Activated naive CD4-positive, alpha-beta T cell treated with anti-CD3 and anti-CD28 coated beads for 36 hours (primary cell): ENCODE measurements at regions of chr5 and their contacts with region 1.

Region 1: GRCh38 chr5:97162045-97162444 is 19.6 kb upstream of the LIX1 start:
- DNase-seq: peak; percentile 76
- H3K4me3 Mint-ChIP-seq: no peak overlapping the region
- H3K27ac Mint-ChIP-seq: no peak overlapping the region
- H3K4me1 Mint-ChIP-seq: peaks cover 17% of the 10 kb centered on the region
- H3K27me3 Mint-ChIP-seq: no peaks in the 10 kb centered on the region

Region 2: DNA sequence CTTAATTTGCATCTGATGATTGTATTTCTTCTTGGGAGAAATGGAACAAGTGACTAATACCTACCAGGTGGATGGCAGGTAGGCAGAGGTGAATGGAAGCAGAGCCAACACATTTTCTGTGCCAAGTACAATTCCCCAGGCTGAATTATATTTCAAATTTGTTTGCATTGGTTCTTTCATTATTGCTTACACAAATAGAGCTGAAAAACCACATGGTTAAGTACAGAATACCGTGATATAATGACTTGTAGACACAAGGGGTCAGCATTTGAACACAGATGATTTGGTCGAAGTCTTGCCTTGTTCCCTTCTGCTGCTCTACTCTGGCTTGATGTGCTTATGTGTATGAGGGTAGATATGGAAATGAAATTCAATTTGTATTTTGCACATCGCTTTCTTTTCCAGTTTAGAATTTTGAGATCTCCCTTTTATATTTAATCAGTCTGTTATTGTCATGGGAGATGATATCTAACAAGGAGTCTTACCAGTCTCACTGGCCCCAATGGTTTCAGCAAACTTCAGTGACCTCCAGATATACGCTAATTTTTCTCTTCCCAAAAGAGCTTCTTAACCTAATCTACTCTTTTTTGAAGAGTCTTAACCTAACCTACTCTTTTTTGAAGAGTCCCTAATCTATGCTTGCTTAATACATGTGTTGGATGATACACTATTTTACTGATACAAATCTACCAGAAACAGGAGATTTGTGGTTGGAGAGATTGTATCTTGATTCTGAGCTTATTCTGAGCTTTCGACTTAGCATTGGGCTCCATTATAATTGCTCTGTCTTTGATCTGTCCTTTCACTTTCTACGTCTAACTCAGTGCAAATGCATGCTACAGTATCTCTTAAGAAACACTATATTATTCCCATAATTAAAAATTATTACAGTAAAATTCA is 817.1 kb before region 1 on chr5:
- CTCF ChIA-PET with region 1: no interaction called
- intact Hi-C with region 1: loop called (anchors 2 kb)
- DNase-seq: peak; percentile 27
- H3K4me3 Mint-ChIP-seq: no peak overlapping the region
- H3K27ac Mint-ChIP-seq: no peak overlapping the region
- H3K4me1 Mint-ChIP-seq: peaks cover 25% of the 10 kb centered on the region
- H3K27me3 Mint-ChIP-seq: peaks cover 4% of the 10 kb centered on the region

Region 3: DNA sequence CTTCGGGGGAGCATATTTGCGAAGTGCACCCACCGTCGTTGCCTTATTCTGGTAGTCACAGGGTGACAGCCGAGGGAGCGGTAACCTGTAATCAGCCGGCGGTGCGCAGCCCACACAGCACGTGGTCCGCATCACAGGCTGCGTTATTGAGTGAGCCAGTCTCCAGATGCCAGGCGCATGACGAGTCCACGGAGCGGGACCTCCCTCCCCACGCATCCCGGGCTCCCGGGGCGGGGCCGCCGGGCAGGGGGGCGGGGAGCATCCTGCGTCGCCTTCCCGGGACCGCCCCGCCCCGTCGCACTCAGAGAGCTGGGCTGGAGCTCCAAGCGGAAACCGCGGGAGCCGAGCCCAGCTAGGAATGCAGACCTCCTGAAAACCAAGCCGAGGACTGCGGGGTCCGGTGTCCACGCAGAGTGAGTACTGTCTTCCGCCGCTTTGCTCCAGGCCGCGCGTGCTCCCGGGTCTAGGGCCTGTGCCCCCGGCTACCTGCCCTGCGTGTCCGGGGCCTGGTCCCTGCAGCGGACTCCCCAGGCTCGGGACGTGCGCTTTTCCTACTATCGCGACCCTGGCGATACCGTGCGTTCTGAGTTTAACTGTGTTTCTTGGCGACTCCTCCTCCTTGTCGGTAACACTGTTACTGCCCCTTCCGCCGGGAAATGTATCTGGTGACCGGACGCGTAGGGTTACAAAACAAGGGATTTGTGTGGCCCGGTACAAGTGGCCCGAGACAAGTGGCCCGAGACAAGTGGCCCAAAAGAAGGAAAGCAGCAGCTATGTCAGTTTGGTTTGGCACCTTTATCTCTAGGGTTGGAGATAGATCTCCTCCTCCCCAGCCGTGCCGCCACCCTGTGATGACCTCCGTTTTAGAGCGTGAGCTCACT is 459.3 kb before region 1 on chr5:
- CTCF ChIA-PET with region 1: interaction called, 4 read pairs
- intact Hi-C with region 1: loop called (anchors 1 kb)
- DNase-seq: peak; percentile 89
- H3K4me3 Mint-ChIP-seq: peak overlapping the region; percentile 87
- H3K27ac Mint-ChIP-seq: peak overlapping the region; percentile 88
- H3K4me1 Mint-ChIP-seq: peaks cover 47% of the 10 kb centered on the region
- H3K27me3 Mint-ChIP-seq: no peaks in the 10 kb centered on the region

Region 4: GRCh38 chr5:96771395-96771794 is 390.6 kb before region 1 on chr5:
- CTCF ChIA-PET with region 1: interaction called, 13 read pairs
- intact Hi-C with region 1: no loop called
- DNase-seq: no peak
- H3K4me3 Mint-ChIP-seq: no peak overlapping the region
- H3K27ac Mint-ChIP-seq: peak overlapping the region; percentile 79
- H3K4me1 Mint-ChIP-seq: peaks cover 13% of the 10 kb centered on the region
- H3K27me3 Mint-ChIP-seq: no peaks in the 10 kb centered on the region

Region 5: GRCh38 chr5:96997265-96997859 is 164.7 kb before region 1 on chr5:
- CTCF ChIA-PET with region 1: interaction called, 30 read pairs
- intact Hi-C with region 1: no loop called
- DNase-seq: peak; percentile 33
- H3K4me3 Mint-ChIP-seq: no peak overlapping the region
- H3K27ac Mint-ChIP-seq: no peak overlapping the region
- H3K4me1 Mint-ChIP-seq: peaks cover 23% of the 10 kb centered on the region
- H3K27me3 Mint-ChIP-seq: no peaks in the 10 kb centered on the region

Region 6: DNA sequence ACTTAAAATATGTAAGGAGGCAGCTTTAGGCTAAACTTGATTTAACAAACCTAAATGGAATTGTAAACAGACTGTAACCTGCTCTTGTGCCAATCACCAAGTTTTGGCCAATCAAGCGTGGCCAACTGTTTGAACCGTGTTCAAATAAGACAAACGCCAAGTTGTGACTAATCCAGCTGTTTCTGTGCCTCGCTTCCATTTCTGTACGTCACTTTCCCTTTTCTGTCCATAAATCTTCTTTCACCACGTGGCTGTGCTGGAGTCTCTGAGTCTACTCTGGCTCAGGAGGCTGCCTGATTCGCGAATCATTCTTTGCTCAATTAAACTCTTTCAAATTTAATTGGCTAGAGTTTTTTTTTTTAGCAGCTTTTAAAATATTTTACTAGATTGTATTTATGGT is 90.9 kb before region 1 on chr5:
- CTCF ChIA-PET with region 1: no interaction called
- intact Hi-C with region 1: no loop called
- DNase-seq: no peak
- H3K4me3 Mint-ChIP-seq: no peak overlapping the region
- H3K27ac Mint-ChIP-seq: no peak overlapping the region
- H3K4me1 Mint-ChIP-seq: no peaks in the 10 kb centered on the region
- H3K27me3 Mint-ChIP-seq: no peaks in the 10 kb centered on the region

Region 7: DNA sequence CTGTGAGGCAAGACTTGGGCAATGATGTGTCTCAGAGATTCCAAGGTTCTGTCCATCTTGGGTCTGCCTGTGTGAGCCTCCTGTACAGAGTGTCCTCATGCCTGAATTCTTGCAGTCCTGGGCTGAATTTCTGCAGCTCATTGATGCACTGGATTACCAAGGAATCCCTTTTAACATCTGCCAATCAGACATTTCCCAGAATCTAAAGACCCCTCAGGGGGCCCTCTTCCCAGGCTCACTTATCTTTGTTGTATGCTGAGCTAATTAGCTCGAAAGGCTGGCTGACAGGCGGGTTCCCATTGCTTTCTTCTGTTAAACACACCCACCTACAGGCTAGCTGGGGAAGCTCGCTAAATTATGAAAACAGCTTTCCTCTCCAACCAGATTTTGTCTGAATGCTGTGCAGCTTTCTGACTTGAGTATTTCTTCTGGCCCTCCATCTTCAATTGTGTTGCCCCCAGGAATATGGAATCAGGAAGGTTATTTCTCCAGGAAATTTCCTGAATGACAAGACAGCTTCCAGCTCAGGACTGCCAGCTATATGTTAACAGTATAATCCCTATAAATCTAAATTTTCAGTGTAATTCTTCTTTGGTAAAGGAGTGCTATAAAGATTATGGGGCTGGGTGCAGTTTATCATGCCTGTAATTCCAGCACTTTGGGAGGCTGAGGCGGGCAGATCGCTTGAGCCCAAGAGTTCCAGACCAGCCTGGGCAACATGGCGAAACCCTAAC is 19.4 kb before region 1 on chr5 and contains the start of gene LIX1:
- CTCF ChIA-PET with region 1: interaction called, 30 read pairs
- intact Hi-C with region 1: no loop called
- DNase-seq: peak; percentile 60
- H3K4me3 Mint-ChIP-seq: no peak within 1 kb of the TSS
- H3K27ac Mint-ChIP-seq: no peak within 1 kb of the TSS
- H3K4me1 Mint-ChIP-seq: no peaks in the 10 kb centered on the region
- H3K27me3 Mint-ChIP-seq: peaks cover 6% of the 10 kb centered on the region
- total RNA-seq, gene LIX1: not detected